IMR-90 (cell line): ENCODE measurements at regions of chr19 and their contacts with region 1.

Region 1: DNA sequence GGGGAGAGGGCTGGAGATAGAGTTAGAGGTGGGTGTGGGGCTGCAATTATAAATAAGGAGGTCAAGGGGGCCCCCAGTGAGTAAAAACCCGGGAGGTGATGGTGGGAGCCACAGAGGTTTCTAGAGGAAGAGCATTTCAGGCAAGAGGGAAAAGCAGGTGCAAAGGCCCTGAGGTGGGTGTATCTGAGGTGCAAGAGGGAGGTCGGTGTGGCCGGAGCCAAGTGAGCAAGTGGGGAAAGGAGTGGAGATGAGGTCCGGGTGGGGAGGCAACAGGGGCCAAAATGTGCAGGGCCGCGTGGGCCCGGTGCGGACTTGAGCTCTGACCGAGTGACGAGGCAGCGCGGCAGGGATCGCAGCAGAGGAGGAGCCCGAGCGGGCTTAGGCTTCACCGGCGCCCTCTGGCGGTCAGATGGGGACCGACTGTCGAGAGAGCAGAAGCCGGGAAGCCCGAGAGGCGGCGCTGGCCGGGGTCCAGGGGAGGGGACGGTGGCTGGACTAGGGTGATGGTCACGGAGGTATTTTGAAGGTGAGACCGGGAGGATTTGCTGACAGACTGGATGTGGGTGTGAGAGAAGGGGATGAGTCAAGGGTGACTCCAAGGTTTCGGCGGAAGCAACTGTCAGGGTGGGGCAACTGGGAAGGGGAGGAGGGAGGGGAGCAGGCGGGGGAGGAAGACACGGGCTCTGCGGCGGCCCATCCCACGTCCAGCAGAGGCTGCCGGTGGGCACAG is 17.7 kb upstream of the SPACA4 start:
- DNase-seq: peak; percentile 78
- ATAC-seq: peak; percentile 95
- H3K4me3 ChIP-seq: peak overlapping the region; percentile 47
- H3K27ac ChIP-seq: no peak overlapping the region; the same call in 1 of the 2 replicates
- H3K4me1 ChIP-seq: peaks cover 2% of the 10 kb centered on the region; the same call in 1 of the 2 replicates
- H3K27me3 ChIP-seq: no peaks in the 10 kb centered on the region; the same call in 1 of the 2 replicates
- CTCF ChIP-seq: peak; percentile 94
- POLR2A ChIP-seq: no peak
- RAD21 ChIP-seq: peak; percentile 66

Region 2: DNA sequence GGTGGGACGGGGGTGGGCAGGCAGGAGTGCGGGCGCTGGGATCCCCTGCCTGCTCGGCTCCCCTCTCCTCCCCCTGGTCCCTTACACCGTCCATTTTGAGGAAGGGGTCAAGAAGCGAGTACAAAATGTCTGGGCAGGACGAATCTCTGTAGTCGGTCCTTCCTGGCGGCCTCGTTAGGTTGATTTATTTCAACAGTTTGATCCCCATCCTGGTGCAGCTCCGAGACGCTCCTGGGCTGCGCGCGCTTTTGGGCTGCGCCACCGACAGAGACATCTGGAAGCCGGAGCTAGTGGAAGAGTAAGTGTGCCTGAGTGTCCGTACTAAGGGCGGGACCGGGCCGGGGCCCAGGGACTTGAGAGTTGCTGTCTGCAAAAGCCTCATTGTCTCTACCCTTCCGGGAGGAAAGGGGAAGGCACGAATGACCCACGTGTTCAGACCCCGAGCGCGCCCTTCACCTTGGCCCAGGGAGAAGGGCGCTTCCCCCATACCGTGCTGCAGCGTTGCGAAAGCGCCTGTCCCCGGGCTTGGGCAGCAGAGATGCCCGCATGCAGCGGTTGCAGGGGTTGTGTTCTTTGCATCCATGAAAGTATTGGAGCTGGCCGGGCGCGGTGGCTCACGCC is 317.2 kb before region 1 on chr19:
- CTCF ChIA-PET with region 1: interaction called, 3 read pairs
- POLR2A ChIA-PET with region 1: no interaction called
- dilution Hi-C with region 1: no loop called
- in situ Hi-C with region 1: loop called (anchors 5 kb)
- intact Hi-C with region 1: loop called (anchors 5 kb)
- DNase-seq: peak; percentile 35
- ATAC-seq: peak; percentile 71
- H3K4me3 ChIP-seq: peak overlapping the region; percentile 41
- H3K27ac ChIP-seq: no peak overlapping the region; the same call in 1 of the 2 replicates
- H3K4me1 ChIP-seq: no peaks in the 10 kb centered on the region; the same call in 1 of the 2 replicates
- H3K27me3 ChIP-seq: no peaks in the 10 kb centered on the region
- CTCF ChIP-seq: no peak
- POLR2A ChIP-seq: no peak
- RAD21 ChIP-seq: no peak

Region 3: DNA sequence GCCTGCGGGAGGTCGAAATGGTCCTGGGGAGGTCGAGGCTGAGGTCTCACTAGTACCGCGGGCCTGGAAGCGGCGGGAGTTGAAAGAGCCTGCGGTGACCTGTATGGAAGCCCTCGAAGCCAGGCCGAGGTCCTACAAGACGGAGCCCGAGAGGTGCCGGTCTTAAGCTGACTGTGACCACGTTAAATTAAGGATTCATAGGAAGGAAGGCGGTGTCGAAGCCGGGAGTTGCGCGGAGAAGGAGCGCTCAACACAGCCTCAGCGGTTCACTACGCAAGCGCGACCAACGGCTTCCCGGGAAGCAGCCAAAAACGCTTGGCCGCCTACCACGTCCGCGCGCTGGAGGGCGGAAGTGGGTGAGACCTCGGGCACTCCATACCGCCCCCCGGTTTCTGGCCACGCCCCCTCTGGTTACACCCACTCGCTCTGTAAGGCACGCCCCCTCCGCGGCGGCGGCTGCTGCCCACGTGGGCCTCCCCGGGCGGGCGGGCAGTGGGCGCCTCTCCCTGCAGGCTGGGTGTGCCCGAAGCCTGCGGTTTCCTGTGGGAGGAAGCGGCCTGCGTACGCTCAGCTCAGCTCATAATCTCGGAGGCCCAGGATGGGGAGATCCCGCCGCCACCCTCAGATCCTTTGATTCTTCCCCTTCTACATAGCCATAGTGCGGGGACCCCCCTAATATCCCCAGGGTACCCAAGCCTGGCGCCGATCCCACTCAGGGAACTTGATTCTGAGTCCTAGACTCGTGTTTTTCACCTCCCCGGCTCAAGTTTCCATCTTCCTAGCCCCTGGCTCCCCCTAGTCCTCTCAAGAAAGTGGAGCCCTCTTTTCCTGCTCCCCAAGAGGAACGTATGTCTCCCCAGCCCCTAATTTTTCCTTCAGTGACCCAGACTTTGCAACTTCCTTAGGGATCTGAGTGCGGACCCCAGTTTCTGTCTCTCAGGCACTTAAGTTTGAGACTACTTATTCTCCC is 266.9 kb before region 1 on chr19:
- CTCF ChIA-PET with region 1: interaction called, 5 read pairs
- POLR2A ChIA-PET with region 1: no interaction called
- dilution Hi-C with region 1: no loop called
- in situ Hi-C with region 1: no loop called
- intact Hi-C with region 1: loop called (anchors 10 kb)
- DNase-seq: peak; percentile 98
- ATAC-seq: peak; percentile 82
- H3K4me3 ChIP-seq: peak overlapping the region; percentile 54
- H3K27ac ChIP-seq: peak overlapping the region; percentile 96
- H3K4me1 ChIP-seq: peaks cover 17% of the 10 kb centered on the region
- H3K27me3 ChIP-seq: no peaks in the 10 kb centered on the region
- CTCF ChIP-seq: peak; percentile 15; the same call in 1 of the 2 replicates
- POLR2A ChIP-seq: peak; percentile 89
- RAD21 ChIP-seq: no peak

Region 4: GRCh38 chr19:48489608-48490216 is 99.1 kb before region 1 on chr19:
- CTCF ChIA-PET with region 1: interaction called, 35 read pairs
- POLR2A ChIA-PET with region 1: no interaction called
- dilution Hi-C with region 1: no loop called
- in situ Hi-C with region 1: no loop called
- intact Hi-C with region 1: loop called (anchors 1 kb)
- DNase-seq: peak; percentile 39
- ATAC-seq: peak; percentile 18; the same call in 1 of the 2 replicates
- H3K4me3 ChIP-seq: no peak overlapping the region
- H3K27ac ChIP-seq: no peak overlapping the region
- H3K4me1 ChIP-seq: peaks cover 12% of the 10 kb centered on the region
- H3K27me3 ChIP-seq: no peaks in the 10 kb centered on the region; the same call in 1 of the 2 replicates
- CTCF ChIP-seq: peak; percentile 78
- POLR2A ChIP-seq: no peak
- RAD21 ChIP-seq: peak; percentile 66

Region 5: DNA sequence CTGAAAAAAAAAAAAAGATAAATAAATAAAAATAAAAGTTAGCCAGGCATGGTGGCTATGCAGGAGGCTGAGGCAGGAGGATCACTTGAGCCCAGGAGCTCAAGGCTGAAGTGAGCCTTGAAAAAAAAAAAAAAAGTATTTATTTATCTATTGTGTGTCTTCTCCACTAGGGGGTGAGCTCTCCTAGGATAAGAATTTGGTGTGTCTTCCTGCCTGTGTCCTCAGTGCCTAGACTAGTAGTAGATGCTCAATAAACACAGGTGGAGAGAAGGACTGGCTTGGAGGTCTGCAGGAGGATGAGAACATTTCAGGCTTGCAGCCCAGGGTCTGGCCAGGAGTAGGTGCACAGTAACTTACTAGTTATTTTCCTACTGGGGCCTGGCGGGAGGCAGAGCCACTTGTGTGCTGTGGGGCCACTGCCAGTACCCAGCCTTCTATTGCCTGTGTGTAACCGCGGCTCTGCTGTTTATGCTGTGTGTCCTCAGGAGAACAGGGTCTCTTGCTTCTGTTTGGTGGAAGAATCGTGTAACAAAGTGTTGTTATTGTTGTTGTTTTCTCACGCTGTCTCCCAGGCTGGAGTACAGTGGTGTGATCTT is 82.6 kb before region 1 on chr19:
- CTCF ChIA-PET with region 1: interaction called, 24 read pairs
- POLR2A ChIA-PET with region 1: no interaction called
- dilution Hi-C with region 1: no loop called
- in situ Hi-C with region 1: loop called (anchors 5 kb)
- intact Hi-C with region 1: loop called (anchors 1 kb)
- DNase-seq: peak; percentile 47
- ATAC-seq: peak; percentile 19; the same call in 1 of the 2 replicates
- H3K4me3 ChIP-seq: no peak overlapping the region
- H3K27ac ChIP-seq: no peak overlapping the region
- H3K4me1 ChIP-seq: peaks cover 3% of the 10 kb centered on the region; the same call in 1 of the 2 replicates
- H3K27me3 ChIP-seq: peaks cover 23% of the 10 kb centered on the region
- CTCF ChIP-seq: peak; percentile 73
- POLR2A ChIP-seq: no peak
- RAD21 ChIP-seq: peak; percentile 83

Region 6: DNA sequence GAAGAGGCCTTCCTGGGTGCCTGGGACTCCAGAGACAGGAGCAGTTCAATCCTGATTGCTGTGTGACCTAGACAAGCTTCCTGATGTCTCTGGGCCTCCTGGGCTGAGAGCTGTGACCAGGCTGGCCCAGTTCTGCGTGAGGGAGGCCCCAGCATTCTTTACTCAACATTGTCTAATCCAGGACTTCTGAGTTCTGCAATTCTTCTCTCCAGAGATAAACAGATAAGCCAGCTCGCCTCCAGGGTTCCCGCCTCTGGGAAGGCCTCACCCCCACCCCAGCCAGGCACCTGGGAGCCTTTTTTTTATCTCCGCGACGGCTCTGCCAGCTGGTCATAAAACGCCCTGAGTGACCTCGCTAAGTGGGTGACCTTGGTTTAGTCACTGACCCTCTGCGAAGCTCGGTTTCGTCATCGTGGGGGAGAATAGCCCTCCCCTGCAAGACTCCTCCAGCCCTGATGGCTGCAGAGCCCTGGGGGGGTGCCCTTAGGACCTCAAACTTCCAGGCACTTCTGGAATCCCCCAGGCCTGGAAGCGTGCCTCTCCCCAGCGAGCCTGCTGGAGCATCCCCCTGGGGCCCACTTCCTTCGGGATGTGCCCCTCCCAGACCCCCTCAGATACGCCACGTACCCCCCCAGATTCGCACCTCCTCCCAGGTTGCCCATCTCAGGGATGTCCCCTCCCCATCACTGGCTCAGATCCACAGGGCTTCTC is 35.0 kb before region 1 on chr19:
- CTCF ChIA-PET with region 1: no interaction called
- POLR2A ChIA-PET with region 1: no interaction called
- dilution Hi-C with region 1: no loop called
- in situ Hi-C with region 1: no loop called
- intact Hi-C with region 1: no loop called
- DNase-seq: peak; percentile 86
- ATAC-seq: peak; percentile 86
- H3K4me3 ChIP-seq: no peak overlapping the region
- H3K27ac ChIP-seq: no peak overlapping the region
- H3K4me1 ChIP-seq: peaks cover 8% of the 10 kb centered on the region
- H3K27me3 ChIP-seq: peaks cover 5% of the 10 kb centered on the region
- CTCF ChIP-seq: no peak
- POLR2A ChIP-seq: no peak
- RAD21 ChIP-seq: no peak

Region 7: GRCh38 chr19:48608798-48609263 is 20.0 kb after region 1 on chr19:
- CTCF ChIA-PET with region 1: no interaction called
- POLR2A ChIA-PET with region 1: no interaction called
- dilution Hi-C with region 1: no loop called
- in situ Hi-C with region 1: no loop called
- intact Hi-C with region 1: loop called (anchors 2 kb)
- DNase-seq: no peak
- ATAC-seq: peak; percentile 83
- H3K4me3 ChIP-seq: no peak overlapping the region
- H3K27ac ChIP-seq: no peak overlapping the region
- H3K4me1 ChIP-seq: no peaks in the 10 kb centered on the region
- H3K27me3 ChIP-seq: no peaks in the 10 kb centered on the region
- CTCF ChIP-seq: peak; percentile 61
- POLR2A ChIP-seq: no peak
- RAD21 ChIP-seq: peak; percentile 64

Region 8: DNA sequence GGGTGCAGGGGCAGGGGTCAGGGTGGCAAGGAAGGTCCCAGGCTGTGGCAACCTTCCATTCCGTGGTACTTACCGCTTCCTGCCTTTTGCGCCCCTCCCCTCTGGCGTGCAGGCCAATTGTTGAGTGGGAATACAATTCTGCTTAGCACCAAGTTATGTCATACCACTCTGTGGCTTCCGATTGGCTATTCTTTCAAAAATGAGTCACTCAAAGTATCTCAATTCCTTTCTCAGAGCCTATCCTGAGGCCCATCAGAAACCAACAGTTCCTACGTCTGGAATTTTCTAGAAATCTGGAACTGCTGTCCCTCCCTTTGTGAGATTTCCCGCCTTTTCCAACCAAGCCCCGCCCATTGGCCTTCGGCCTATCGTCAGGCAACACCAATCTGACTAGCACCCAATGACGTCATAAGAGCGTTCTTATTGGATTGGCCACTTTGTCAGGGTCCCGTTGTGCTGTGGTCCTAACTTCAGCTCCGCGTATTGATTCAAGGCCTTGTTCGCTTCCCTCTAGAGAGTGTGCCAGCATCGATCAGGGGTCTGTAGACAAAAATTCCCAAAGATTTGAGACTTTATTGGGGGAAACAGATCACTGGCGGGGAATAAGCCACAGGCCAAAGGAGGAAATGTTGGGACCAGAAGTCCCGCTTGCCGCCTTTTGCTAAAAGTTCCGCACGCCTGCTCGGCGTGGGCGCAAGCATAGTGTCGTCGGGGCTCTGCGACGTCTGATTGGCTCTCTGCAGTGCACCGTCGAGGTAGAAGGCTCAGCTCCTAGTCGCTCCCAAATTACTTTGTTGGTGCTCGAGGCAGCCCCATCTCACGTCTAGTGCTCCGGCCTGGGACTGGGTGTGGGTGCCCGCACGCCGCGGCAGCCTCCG is 72.3 kb after region 1 on chr19:
- CTCF ChIA-PET with region 1: no interaction called
- POLR2A ChIA-PET with region 1: no interaction called
- dilution Hi-C with region 1: no loop called
- in situ Hi-C with region 1: no loop called
- intact Hi-C with region 1: no loop called
- DNase-seq: peak; percentile 86
- ATAC-seq: peak; percentile 82
- H3K4me3 ChIP-seq: no peak overlapping the region
- H3K27ac ChIP-seq: no peak overlapping the region
- H3K4me1 ChIP-seq: peaks cover 3% of the 10 kb centered on the region
- H3K27me3 ChIP-seq: no peaks in the 10 kb centered on the region
- CTCF ChIP-seq: no peak
- POLR2A ChIP-seq: no peak
- RAD21 ChIP-seq: no peak

Region 9: DNA sequence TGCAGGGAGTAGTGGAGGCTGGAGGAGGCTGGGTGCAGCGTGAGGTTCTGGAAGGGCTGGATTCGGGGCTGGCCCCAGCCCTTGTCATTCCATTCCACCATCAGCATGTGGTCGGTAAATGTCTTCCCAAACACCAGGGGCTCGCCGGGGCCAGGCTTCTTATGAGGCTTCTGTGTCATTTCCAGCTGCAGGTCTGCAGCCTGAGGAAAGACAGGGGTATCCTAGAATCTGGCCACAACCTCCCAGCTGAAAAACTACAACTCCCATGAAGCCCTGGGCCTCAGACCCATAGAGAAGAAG is 217.6 kb after region 1 on chr19:
- CTCF ChIA-PET with region 1: no interaction called
- POLR2A ChIA-PET with region 1: no interaction called
- dilution Hi-C with region 1: no loop called
- in situ Hi-C with region 1: no loop called
- intact Hi-C with region 1: no loop called
- DNase-seq: no peak
- ATAC-seq: no peak
- H3K4me3 ChIP-seq: no peak overlapping the region
- H3K27ac ChIP-seq: no peak overlapping the region
- H3K4me1 ChIP-seq: peaks cover 5% of the 10 kb centered on the region; the same call in 1 of the 2 replicates
- H3K27me3 ChIP-seq: no peaks in the 10 kb centered on the region
- CTCF ChIP-seq: no peak
- POLR2A ChIP-seq: no peak
- RAD21 ChIP-seq: no peak

Region 10: DNA sequence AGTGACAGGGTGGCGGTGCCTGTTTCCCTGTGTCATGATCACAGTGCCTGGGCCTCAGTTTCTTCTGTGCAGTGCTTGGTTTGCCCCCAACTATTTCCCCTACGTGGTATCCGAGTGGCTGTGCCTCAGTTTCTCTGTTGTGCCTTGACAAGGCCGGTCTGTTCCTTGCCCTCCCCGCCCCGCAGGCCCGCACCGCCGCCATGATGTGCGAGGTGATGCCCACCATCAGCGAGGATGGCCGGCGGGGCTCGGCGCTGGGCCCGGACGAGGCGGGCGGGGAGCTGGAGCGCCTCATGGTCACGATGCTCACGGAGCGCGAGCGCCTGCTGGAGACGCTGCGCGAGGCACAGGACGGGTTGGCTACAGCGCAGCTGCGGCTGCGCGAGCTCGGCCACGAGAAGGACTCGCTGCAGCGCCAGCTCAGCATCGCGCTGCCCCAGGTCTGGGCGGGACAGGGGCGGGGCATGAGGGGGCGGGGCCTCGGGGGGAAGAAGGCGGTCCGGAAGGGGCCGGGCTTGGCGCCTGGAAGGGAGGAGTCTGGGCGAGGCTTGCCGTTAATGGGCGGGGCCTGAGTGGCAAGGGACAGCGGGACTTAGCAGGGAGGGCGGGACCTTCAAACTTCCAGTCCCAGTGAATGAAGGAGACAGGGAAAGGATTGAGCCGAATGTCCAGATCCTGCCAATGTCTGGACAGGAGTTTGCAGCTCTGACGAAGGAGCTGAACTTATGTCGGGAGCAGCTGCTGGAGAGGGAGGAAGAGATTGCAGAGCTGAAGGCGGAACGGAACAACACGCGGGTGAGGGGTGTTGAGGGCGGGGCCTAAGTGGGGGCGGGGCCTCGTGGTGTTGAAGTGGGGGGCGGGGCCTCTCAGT is 539.1 kb after region 1 on chr19:
- CTCF ChIA-PET with region 1: no interaction called
- POLR2A ChIA-PET with region 1: no interaction called
- dilution Hi-C with region 1: no loop called
- in situ Hi-C with region 1: no loop called
- intact Hi-C with region 1: no loop called
- DNase-seq: peak; percentile 95
- ATAC-seq: peak; percentile 100
- H3K4me3 ChIP-seq: peak overlapping the region; percentile 53
- H3K27ac ChIP-seq: peak overlapping the region; percentile 55
- H3K4me1 ChIP-seq: peaks cover 5% of the 10 kb centered on the region; the same call in 1 of the 2 replicates
- H3K27me3 ChIP-seq: peaks cover 4% of the 10 kb centered on the region
- CTCF ChIP-seq: peak; percentile 26; the same call in 1 of the 2 replicates
- POLR2A ChIP-seq: no peak
- RAD21 ChIP-seq: no peak